ENCODE measurements at regions of chr5 and their contacts with region 1.

Region 1: DNA sequence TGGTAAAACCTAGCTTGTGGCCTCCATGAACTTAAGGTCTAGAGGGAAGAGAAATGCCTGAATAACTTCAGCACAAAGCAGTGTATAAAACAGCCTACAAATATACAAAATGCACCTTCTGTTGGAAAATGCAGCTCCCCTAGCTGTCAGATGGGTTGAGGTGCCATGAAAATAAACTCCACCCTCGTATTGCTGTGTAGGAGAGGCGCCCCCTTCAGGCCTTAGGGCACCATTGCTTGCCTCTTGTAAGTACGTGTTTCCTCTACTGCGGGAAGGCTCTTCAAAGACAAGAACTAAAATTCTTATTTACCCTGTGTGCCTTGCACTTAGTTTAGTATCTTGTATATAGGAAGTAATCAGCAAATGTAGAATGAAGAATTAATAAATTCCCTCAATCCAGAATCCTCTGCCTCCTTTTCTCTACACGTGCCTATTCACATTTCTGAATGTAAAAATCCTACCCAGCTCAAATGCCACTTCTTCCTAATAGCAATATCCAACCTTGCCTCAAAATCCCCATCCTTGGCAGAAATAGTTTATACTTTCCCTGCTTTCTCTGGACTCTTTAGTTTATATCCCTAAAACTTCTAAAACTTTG is 393.7 kb upstream of the PDE4D start:
- DNase-seq: peak; percentile 62
- H3K4me3 ChIP-seq: no peak overlapping the region
- H3K27ac ChIP-seq: no peak overlapping the region
- H3K4me1 ChIP-seq: no peaks in the 10 kb centered on the region
- H3K27me3 ChIP-seq: peaks cover 4 to 13% of the 10 kb centered on the region in 2 experiments
- CTCF ChIP-seq: peak; percentile 82 to 86
- POLR2A ChIP-seq: no peak

Region 2: DNA sequence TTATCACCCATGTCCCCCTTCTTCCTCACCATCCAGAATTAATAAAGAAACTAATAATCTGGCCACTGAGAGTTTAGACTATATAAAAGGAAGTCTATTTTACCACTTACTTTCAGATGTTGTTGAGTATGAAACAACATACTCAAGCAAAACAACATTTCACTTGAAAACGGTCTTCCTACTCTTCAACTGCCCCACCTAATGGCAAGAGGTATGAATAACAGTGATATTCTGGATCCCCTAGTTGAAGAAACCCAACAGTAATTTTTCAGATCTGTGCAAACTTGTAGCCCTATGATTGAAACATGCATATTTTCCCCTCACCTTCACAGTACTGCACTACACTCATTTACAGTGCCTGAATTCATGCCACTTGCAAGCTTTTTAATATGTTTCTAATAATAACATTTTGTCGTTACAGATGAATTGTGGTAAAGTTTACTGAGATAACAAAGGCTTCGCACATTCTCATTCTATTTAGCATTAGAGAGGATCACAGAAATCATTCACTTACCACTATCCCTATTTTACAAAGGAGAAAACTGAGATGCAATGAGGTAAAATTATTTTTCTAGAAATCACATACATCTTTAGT is 125.8 kb before region 1 on chr5:
- CTCF ChIA-PET with region 1: interaction called, 3 read pairs
- POLR2A ChIA-PET with region 1: no interaction called
- dilution Hi-C with region 1: no loop called
- intact Hi-C with region 1: loop called (anchors 10 kb)
- DNase-seq: peak; percentile 28
- H3K4me3 ChIP-seq: no peak overlapping the region
- H3K27ac ChIP-seq: no peak overlapping the region
- H3K4me1 ChIP-seq: no peaks in the 10 kb centered on the region
- H3K27me3 ChIP-seq: peaks cover 2 to 11% of the 10 kb centered on the region in 2 experiments
- CTCF ChIP-seq: peak; percentile 26 to 47
- POLR2A ChIP-seq: no peak

Region 3: DNA sequence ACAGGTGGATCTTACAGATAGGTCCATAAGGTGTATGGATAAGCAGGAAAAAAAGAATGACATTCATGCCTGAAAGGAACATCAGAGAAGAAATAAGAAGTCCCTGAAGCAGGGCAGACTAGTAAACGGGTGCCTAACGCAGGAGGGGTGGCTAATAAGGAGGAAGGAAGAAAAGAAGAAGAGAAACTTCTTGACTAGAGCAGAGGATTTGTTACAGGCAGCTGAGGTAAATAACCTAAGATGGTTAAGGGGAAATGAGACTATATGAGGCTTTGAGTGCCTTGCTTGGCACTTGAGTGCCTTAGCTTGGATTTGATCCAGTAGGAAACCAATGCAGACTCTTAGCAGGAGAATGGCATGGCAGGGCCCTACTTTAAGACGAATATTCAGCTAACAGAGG is 80.2 kb before region 1 on chr5:
- CTCF ChIA-PET with region 1: interaction called, 3 read pairs
- POLR2A ChIA-PET with region 1: interaction called, 13 read pairs
- dilution Hi-C with region 1: no loop called
- intact Hi-C with region 1: loop called (anchors 5 kb)
- DNase-seq: no peak
- H3K4me3 ChIP-seq: no peak overlapping the region
- H3K27ac ChIP-seq: no peak overlapping the region
- H3K4me1 ChIP-seq: peaks cover 14% of the 10 kb centered on the region
- H3K27me3 ChIP-seq: peaks cover 0 to 1% of the 10 kb centered on the region in 2 experiments
- CTCF ChIP-seq: no peak
- POLR2A ChIP-seq: no peak

Region 4: DNA sequence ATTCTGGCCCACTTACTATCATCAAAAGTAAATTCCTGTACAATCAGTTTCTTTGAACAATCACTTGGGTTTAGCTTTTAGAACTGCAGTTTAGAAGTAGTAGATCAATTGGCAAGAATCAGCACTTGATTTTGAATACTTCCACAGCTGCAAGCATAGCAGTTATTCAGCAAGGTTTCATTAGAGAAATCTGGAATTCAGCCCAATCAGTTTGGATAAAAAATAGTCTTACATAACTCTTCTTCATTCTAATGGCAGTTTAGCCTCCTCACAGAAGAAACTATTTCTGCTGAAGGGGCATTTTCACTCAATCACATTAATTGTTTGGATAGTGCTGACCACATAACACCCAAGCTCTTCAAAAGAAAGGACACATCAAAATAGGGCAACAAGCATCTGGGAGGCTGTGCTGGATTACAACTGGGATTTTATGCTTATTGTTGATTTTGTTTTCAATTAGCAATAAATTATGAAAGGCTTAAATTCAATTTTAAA is 57.5 kb before region 1 on chr5:
- CTCF ChIA-PET with region 1: no interaction called
- POLR2A ChIA-PET with region 1: no interaction called
- dilution Hi-C with region 1: no loop called
- intact Hi-C with region 1: no loop called
- DNase-seq: no peak
- H3K4me3 ChIP-seq: no peak overlapping the region
- H3K27ac ChIP-seq: no peak overlapping the region
- H3K4me1 ChIP-seq: no peaks in the 10 kb centered on the region
- H3K27me3 ChIP-seq: peaks cover 3 to 4% of the 10 kb centered on the region in 2 experiments
- CTCF ChIP-seq: no peak
- POLR2A ChIP-seq: no peak

Region 5: DNA sequence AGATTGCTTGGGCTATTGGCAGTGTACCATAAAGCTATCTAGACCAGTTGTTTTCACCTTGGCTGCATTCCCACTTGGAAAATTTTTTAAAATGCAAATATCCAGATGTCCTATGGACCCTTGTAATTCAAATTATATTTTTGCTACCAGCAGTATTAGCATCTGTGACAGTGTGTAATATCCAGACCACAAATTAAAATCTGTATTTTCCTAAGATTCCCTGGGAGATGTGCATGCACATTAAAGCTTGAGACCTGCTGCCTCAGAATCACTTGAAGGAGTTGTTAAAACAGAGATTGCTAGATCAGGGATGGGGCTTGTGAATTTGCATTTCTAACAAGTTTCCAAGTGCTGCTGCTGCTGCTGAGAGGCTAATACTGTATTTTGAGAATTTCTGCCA is 12.5 kb before region 1 on chr5:
- CTCF ChIA-PET with region 1: interaction called, 20 read pairs
- POLR2A ChIA-PET with region 1: no interaction called
- dilution Hi-C with region 1: no loop called
- intact Hi-C with region 1: no loop called
- DNase-seq: no peak
- H3K4me3 ChIP-seq: no peak overlapping the region
- H3K27ac ChIP-seq: no peak overlapping the region
- H3K4me1 ChIP-seq: peaks cover 8% of the 10 kb centered on the region
- H3K27me3 ChIP-seq: no peaks in the 10 kb centered on the region
- CTCF ChIP-seq: no peak
- POLR2A ChIP-seq: no peak

Region 6: GRCh38 chr5:60586307-60586901 is 299.1 kb after region 1 on chr5:
- CTCF ChIA-PET with region 1: no interaction called
- POLR2A ChIA-PET with region 1: no interaction called
- dilution Hi-C with region 1: no loop called
- intact Hi-C with region 1: loop called (anchors 5 kb)
- DNase-seq: peak; percentile 36
- H3K4me3 ChIP-seq: no peak overlapping the region
- H3K27ac ChIP-seq: no peak overlapping the region
- H3K4me1 ChIP-seq: no peaks in the 10 kb centered on the region
- H3K27me3 ChIP-seq: no peaks in the 10 kb centered on the region
- CTCF ChIP-seq: peak in 1 of 2 donors; percentile 24
- POLR2A ChIP-seq: no peak